Left cardiac atrium (tissue), 4 donors: ENCODE measurements at regions of chr15 and their contacts with region 1.

Region 1: DNA sequence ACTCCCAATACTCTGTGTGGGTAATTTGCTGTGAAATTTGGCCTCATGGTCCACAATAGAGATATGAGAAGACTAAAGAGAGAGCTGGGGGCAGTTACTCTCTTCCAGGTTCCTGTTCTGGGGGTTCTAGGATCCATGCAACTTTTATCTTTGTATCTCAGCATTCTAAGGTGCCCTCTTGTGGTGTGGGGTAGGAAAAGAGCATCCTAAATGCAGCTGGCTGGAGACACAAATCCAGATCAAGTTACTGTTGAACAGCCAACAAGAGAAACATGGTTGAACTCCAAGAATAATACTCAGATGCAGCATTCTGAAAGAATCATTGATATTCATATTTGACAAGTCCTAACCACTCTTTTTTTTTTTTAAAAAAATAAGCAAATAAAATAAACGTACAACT is 238.2 kb downstream of the GREM1 start:
- DNase-seq: no peak
- ATAC-seq: peak; percentile 39 to 57

Region 2: DNA sequence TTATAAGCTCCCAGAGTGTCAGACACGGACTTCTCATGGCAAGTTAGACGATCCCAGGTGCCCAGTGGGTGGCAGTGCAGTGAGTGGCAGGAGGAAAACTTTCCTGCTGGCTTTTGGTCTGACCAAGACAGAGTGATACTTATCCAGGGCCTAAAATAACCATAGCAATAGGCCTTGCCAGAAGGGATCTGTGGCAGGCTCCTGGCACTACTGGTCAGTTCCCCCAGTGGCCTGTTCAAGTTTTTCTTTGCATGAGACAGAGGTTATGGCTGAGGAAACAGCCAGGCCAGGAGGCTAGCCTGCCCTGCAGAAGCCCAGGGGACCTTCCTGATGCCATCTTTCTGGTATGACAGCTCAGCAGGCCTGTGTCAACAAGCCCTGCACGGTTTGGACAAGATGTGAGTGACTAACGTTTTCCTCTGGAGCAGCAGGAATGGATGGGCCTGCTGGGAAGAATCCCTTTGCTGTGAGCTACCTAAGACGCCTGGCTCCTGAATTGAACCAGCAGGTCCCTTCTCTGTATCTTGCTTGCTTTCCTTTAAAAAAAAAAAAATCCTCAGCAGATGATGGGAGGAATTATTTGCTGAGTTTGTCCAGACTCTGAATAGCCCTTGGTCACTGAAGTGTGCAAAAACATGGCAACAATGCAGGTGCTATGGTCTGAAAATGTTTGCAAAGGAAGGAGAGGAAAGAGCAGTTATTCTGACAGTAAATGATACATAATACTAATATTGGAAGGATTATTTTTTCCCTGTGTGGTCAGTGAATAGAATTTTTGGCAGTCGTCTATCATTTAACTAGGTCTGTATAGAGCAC is 296.5 kb before region 1 on chr15:
- intact Hi-C with region 1: loop called in 1 of 2 experiments (anchors 10 kb)
- DNase-seq: no peak
- ATAC-seq: no peak

Region 3: DNA sequence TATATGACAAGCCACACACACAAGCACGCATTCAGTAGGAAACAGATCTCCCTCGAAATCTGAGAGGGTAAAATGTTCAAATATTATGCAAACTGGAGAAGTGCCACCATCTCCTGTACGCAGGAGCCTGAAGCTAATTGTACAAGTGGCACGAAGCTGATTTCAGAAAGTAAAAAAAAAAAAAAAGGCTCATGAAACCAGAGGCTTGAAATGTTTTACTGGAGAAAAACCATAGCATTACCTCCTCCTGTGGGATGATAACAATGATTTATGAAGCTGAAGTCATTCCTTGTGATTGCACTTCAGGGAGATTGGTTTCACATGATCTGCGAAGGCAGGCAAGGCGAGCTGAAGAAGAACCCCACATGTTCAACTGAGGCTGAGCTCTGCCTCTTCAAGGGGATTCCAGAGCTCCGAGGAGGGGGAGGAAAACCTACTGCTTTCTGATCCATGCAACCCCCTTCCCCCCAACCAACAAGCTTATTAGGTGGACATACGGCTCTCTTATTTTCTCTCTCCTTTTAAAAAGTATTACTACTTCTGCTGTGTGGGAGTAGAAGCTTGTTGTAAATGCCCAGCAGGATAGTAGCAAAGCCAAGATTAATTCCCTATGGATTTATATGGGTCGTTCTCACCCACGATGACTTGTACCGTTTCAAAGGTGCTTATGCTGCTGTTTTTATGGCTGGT is 137.1 kb before region 1 on chr15:
- intact Hi-C with region 1: no loop called
- DNase-seq: no peak
- ATAC-seq: no peak

Region 4: DNA sequence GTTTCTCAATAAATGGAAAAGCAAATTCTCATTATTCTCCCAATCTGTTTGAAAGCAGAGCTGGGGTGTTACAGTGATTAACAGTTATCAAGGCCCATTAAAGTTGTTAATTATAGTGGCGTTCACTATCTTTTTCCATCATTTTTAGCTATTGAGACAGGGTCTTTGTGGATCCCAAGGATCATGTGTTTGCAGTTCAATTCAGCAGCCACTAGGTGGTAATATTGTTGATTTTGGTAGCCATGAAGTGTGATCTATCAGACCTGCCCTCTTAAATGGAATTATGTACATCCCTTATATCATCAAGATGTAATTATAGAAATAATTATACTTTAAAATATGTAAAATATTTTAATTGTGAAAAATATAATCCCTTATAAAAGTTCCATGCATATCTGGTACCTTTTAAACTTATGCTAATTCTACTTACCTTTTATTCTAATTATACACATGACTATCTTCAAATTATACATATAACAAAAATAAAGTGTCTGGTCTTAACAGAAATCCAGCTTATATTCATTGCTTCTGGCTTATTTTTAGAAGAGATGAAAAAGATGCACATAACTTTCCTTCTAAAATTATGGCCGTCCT is 111.8 kb before region 1 on chr15:
- intact Hi-C with region 1: loop called in 1 of 2 experiments (anchors 10 kb)
- DNase-seq: no peak
- ATAC-seq: no peak